ENCODE measurements at regions of chr4 and their contacts with region 1.

Region 1: GRCh38 chr4:41692717-41693345 is 55.7 kb downstream of the PHOX2B start:
- DNase-seq: peak; percentile 80

Region 2: DNA sequence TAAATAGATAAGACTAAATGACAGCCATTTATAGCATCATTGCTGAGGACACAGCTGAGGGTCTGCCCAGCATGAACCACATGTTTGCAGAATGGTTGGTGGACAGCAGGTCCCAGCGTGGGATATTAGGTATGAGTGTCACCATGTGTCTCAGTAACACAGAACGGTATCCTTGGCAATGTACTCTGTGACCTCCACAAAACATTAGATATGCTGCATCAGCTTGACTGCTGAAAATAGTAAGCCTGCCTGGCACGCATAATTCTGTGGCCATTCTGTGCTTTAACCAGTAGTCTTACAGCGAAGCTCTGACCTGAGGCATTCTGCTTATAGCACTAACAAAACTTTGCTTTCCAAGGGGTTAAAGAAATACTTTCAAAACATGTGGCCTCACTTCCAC is 122.9 kb before region 1 on chr4:
- intact Hi-C with region 1: no loop called
- DNase-seq: no peak

Region 3: DNA sequence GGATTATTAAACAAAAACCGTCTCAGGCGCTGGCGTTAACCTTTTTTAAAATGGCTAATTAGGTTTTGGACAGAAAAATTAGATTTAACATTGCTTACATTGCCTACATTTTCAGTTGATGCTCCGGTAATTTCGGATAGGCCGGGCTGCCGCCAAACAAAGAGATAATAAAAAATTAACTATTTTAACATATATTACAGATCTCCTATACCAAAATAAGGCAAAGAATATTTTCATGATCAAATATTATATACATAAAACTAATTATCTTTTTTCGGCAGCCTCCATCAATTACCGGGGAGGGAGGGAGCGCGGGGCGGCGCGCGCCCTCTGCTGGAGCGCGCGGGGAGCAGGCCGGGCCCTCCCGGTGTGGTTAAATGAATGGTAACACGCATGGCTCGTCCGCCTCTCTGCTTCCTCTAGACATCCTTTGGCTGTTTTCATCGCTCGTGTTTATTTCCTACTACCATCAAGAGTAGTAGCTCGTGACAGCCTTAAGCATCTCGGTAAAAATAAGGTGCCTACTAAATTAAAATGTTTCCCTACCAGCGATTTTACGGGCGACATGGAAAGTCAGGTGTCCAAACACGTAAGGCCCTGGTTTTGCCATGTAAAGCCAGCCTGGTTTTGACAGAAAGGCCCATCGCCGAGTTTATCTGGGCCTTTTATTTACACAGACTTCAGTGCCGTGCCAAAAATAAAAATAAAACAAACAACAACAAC is 190.0 kb after region 1 on chr4:
- intact Hi-C with region 1: loop called (anchors 10 kb)
- DNase-seq: peak; percentile 81

Measured in posterior vena cava (tissue), 2 donors.